Heart right ventricle (tissue), 16 donors: ENCODE measurements at regions of chr19 and their contacts with region 1.

Region 1: GRCh38 chr19:44002566-44003460 is at the start of gene ZNF230:
- DNase-seq: peak; percentile 81 to 96
- ATAC-seq: peak; percentile 99 to 100 (median 100)
- H3K4me3 ChIP-seq: peak within 1 kb of the TSS; percentile 42 to 94 (median 80)
- H3K27ac ChIP-seq: peak within 1 kb of the TSS in 9 of 10 donors; percentile 64 to 88 (median 78)
- H3K4me1 ChIP-seq: peaks cover 0 to 31% (median 17%) of the 10 kb centered on the region in 9 donors
- H3K27me3 ChIP-seq: no peaks in the 10 kb centered on the region
- CTCF ChIP-seq: no peak
- total RNA-seq, gene ZNF230: 1.6 to 4.3 (median 3.4) TPM

Region 2: DNA sequence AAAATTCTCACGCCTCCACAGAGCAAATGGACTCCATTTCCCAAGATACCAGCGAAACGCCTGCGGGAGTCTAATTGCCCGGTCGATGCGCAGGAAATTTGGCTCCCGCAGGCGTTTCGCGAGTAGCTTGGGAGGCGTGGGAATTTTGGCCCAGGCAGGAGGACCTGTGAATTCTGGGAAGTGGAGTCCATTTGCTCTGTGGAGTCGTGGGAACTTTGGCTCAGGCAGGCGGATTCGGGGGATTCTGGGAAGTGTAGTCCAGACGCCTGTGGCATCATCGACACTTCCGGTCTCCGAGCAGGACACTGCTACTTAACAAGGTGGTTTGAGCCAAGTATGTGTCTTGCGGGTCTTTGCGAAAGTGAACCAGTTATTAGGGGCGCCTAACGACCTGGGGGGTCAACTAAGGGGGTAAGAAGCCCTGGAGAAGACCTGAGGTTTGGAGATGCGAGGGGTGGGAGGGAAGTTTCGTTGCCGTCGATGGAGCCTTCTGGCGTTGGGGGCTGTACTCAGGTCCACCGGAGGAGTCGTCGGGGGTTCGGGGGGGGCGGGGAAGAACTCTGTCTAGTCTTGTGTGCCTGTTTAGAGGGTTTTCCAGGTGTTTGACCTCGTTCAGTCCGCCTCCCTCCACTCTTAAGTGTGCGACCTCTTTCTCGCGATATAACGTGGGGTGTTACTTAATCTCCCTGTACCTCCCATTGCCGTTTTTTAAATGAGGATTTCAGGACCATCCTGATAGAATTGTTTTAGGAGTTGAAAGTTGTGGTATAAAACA is 18.7 kb before region 1 on chr19 and contains the start of gene ZNF155:
- intact Hi-C with region 1: loop called in 2 of 10 experiments (anchors 1 to 2 kb)
- DNase-seq: peak; percentile 88 to 97
- ATAC-seq: peak; percentile 98 to 100 (median 100)
- H3K4me3 ChIP-seq: peak within 1 kb of the TSS; percentile 51 to 80 (median 70)
- H3K27ac ChIP-seq: peak within 1 kb of the TSS in 9 of 10 donors; percentile 69 to 83 (median 81)
- H3K4me1 ChIP-seq: peaks cover 0 to 20% (median 12%) of the 10 kb centered on the region in 9 donors
- H3K27me3 ChIP-seq: no peaks in the 10 kb centered on the region
- CTCF ChIP-seq: no peak
- total RNA-seq, gene ZNF155: 1.5 to 7.8 (median 6.9) TPM

Region 3: GRCh38 chr19:44051654-44052402 is 49.0 kb after region 1 on chr19 and contains the start of gene ZNF223:
- intact Hi-C with region 1: loop called in 1 of 10 experiments (anchors 1 kb)
- DNase-seq: peak; percentile 92 to 97
- ATAC-seq: peak; percentile 100
- H3K4me3 ChIP-seq: peak within 1 kb of the TSS; percentile 52 to 81 (median 71)
- H3K27ac ChIP-seq: peak within 1 kb of the TSS in 9 of 10 donors; percentile 49 to 82 (median 64)
- H3K4me1 ChIP-seq: peaks cover 3 to 21% (median 12%) of the 10 kb centered on the region in 9 donors
- H3K27me3 ChIP-seq: peaks cover 0 to 37% (median 18%) of the 10 kb centered on the region in 7 donors
- CTCF ChIP-seq: no peak
- total RNA-seq, gene ZNF223: 2.3 to 5.4 (median 3.2) TPM

Region 4: GRCh38 chr19:44093931-44094765 is 91.3 kb after region 1 on chr19 and contains the start of gene ZNF224:
- intact Hi-C with region 1: loop called in 2 of 10 experiments (anchors 5 kb)
- DNase-seq: peak; percentile 87 to 95
- ATAC-seq: peak; percentile 98 to 100 (median 99)
- H3K4me3 ChIP-seq: peak within 1 kb of the TSS; percentile 74 to 94 (median 84)
- H3K27ac ChIP-seq: peak within 1 kb of the TSS; percentile 38 to 91 (median 80)
- H3K4me1 ChIP-seq: peaks cover 3 to 21% (median 12%) of the 10 kb centered on the region in 9 donors
- H3K27me3 ChIP-seq: no peaks in the 10 kb centered on the region
- CTCF ChIP-seq: no peak
- total RNA-seq, gene ZNF224: 8.1 to 16.0 (median 13.3) TPM

Region 5: DNA sequence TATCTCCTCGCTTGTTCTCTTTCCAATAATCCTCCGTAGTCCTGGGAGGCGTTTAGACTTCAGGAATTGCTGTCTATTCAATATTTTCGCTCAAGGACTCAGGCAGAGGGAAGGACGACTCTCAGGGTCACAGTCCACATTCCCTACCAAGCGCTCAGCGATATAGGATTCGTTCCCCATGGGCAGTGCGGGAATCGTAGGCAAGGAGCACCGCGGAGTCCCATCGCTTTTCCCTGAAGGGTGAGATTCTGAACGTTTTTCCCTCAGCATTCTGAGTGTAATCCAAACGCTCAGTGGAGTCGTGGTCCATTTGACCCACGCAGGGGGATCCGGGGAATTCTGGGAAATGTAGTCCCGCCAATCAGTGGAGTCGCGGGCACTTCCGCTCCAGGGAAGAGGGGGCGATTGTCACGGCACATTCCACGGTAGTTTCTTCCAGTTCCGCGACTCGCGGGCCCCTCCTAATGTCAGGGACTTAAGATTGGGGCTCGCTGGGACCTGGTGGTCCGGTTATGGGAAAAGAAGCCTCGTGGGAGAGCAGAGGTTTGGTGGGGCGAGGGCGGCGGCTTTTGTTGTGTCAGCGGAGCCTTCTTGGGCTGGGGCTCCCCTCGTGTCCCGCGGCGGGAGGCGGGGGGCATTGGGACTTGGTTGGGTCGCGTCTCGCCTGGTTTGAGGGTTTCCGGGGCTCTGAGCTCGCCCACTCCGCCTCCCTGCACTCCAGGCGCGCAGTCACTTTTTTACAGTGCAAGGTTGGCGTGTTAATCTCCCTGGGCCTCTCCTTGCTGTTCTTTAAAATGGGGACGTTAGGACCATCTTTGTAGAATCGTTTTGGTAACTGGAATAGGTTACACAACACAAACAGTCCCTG is 138.6 kb after region 1 on chr19 and contains the start of gene ZNF234:
- intact Hi-C with region 1: no loop called
- DNase-seq: peak; percentile 70 to 93
- ATAC-seq: peak; percentile 95 to 99 (median 98)
- H3K4me3 ChIP-seq: peak within 1 kb of the TSS; percentile 81 to 97 (median 93)
- H3K27ac ChIP-seq: peak within 1 kb of the TSS; percentile 24 to 92 (median 87)
- H3K4me1 ChIP-seq: peaks cover 0 to 37% (median 17%) of the 10 kb centered on the region in 9 donors
- H3K27me3 ChIP-seq: no peaks in the 10 kb centered on the region
- CTCF ChIP-seq: peak in 5 of 9 donors; percentile 6 to 27 (median 8)
- total RNA-seq, gene ZNF234: 8.0 to 13.4 (median 9.0) TPM

Region 6: GRCh38 chr19:44176590-44176989 is 173.8 kb after region 1 on chr19:
- intact Hi-C with region 1: no loop called
- DNase-seq: no peak
- ATAC-seq: no peak
- H3K4me3 ChIP-seq: no peak overlapping the region
- H3K27ac ChIP-seq: no peak overlapping the region
- H3K4me1 ChIP-seq: no peaks in the 10 kb centered on the region
- H3K27me3 ChIP-seq: no peaks in the 10 kb centered on the region
- CTCF ChIP-seq: no peak